Heart right ventricle (tissue), 16 donors: ENCODE measurements at regions of chr1 and their contacts with region 1.

Region 1: DNA sequence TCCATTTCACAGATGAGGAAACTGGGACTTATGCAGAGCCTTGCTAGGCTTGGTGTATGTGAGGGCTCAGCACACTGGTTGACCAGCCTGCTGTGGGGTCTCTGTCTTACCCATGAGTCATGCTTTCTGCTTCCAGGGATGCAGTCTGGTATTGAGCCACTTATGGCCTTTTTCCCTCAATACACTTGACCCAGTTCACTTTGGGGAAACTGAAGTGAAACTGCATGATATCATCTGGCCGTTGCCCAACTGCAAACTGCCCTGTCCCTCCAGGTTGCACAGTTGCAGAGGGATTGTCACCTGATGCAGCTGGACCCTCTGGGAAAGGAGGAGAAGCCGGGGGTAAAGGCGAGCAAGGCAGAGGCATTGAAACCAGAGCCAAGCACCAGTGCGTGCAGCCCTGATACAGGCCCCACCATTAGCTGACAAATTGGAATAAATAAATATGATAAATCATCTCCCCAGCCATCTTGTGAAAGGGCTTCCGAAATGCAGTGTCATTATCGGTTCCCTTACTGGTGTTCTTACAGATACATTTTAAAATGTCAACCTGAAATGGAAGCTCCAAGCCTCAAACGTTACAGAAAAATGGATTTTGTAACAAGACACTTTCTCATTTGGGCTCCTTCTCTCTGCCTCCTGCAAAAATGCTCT is 39.3 kb upstream of the DUSP10 start:
- DNase-seq: no peak
- ATAC-seq: peak in 1 of 8 donors; percentile 61
- H3K4me3 ChIP-seq: no peak overlapping the region
- H3K27ac ChIP-seq: no peak overlapping the region
- H3K4me1 ChIP-seq: peaks cover 0 to 45% (median 0%) of the 10 kb centered on the region in 9 donors
- H3K27me3 ChIP-seq: peaks cover 0 to 5% (median 0%) of the 10 kb centered on the region in 7 donors
- CTCF ChIP-seq: no peak

Region 2: GRCh38 chr1:221543529-221544120 is 237.6 kb before region 1 on chr1:
- intact Hi-C with region 1: no loop called
- DNase-seq: no peak
- ATAC-seq: peak in 3 of 8 donors; percentile 22 to 61 (median 37)
- H3K4me3 ChIP-seq: no peak overlapping the region
- H3K27ac ChIP-seq: no peak overlapping the region
- H3K4me1 ChIP-seq: no peaks in the 10 kb centered on the region
- H3K27me3 ChIP-seq: peaks cover 0 to 3% (median 0%) of the 10 kb centered on the region in 7 donors
- CTCF ChIP-seq: peak; percentile 11 to 69 (median 60)

Region 3: DNA sequence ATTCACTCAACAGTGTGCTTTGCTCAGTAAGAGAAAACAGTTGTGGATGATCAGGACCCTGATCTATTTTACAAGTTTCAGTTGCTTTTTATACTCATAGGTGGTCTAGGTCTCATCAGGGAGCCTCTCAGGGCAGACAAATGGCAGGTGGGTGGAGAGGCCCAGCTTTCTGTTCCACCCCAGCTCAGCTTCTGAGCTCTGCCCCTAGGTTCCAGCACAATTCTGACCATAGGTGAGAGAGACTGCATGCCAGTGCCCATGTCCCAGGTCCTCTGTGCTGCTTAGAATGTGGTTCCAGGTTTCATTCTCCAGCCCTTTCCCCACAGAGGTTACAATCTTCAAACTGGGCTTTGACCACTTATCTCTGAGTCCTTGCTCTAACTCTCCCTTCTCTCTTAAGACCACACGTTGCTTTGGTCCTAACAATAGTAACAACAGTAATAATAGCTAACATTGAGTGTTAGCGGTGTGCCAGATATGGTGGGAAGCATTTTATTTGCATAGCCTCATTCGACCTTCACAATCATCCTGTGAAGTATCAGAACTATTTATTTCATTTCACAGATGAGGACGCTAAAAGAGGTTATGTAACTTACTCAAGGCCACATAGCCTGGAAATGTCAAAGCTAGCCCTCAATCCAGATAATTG is 19.8 kb before region 1 on chr1:
- intact Hi-C with region 1: loop called in 1 of 10 experiments (anchors 1 kb)
- DNase-seq: no peak
- ATAC-seq: peak in 1 of 8 donors; percentile 26
- H3K4me3 ChIP-seq: no peak overlapping the region
- H3K27ac ChIP-seq: no peak overlapping the region
- H3K4me1 ChIP-seq: peaks cover 0 to 16% (median 0%) of the 10 kb centered on the region in 9 donors
- H3K27me3 ChIP-seq: no peaks in the 10 kb centered on the region
- CTCF ChIP-seq: no peak